ENCODE measurements at regions of chr10 and their contacts with region 1.

Region 1: GRCh38 chr10:69786791-69787190 is 14.9 kb upstream of the COL13A1 start:
- DNase-seq: peak in 2 of 3 donors; percentile 17 to 42
- H3K4me3 ChIP-seq: no peak overlapping the region
- H3K27ac ChIP-seq: no peak overlapping the region
- H3K4me1 ChIP-seq: no peaks in the 10 kb centered on the region
- H3K27me3 ChIP-seq: peaks cover 0 to 15% (median 9%) of the 10 kb centered on the region in 5 experiments

Region 2: GRCh38 chr10:69800109-69800508 is 13.3 kb after region 1 on chr10:
- CTCF ChIA-PET with region 1: interaction called, 15 read pairs
- POLR2A ChIA-PET with region 1: no interaction called
- DNase-seq: peak; percentile 32 to 44 (median 37)
- H3K4me3 ChIP-seq: no peak overlapping the region
- H3K27ac ChIP-seq: no peak overlapping the region
- H3K4me1 ChIP-seq: peaks cover 3 to 23% (median 19%) of the 10 kb centered on the region in 4 experiments
- H3K27me3 ChIP-seq: peaks cover 0 to 49% (median 17%) of the 10 kb centered on the region in 5 experiments

Region 3: DNA sequence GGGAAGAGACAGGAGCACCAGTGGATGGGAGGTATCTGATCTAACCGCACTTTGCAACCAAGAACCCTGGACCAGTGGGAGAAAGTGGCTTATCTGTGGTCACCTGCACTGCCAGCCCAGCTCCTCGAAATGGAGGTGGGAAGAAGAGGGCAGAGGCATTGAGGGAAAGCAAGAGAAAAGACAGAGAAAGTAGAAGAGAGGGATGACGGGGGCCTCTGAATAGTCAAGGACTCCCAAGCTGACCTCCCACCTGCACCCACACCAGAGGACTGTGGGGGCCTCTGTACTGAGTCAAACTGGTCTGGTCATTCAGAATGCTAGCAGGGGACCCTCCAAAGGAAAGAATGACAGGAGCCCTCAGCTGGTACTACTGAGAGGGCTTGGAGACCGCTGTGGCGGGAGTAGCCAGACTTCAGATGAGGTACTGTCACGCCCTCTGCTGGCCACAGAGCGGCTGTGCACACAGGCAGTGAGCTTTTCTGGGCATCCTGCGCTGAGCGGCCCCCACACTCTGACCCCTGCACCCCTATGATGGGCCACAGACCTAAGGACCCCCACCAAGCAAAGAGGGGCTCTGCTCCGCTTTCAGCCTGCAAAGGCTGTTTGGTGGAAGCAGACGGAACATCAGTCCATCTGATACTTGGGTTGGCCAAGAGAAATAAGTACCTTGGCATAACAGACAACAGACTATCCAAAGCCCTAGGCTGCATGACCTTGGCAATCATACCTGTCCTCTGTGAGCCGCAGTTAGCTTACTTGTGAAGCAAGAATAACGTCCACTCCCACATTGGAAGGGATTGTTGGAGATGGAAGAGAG is 127.8 kb after region 1 on chr10:
- CTCF ChIA-PET with region 1: interaction called, 14 read pairs
- POLR2A ChIA-PET with region 1: no interaction called
- DNase-seq: peak; percentile 44 to 78 (median 68)
- H3K4me3 ChIP-seq: no peak overlapping the region
- H3K27ac ChIP-seq: no peak overlapping the region
- H3K4me1 ChIP-seq: peaks cover 0 to 4% (median 0%) of the 10 kb centered on the region in 4 experiments
- H3K27me3 ChIP-seq: no peaks in the 10 kb centered on the region